Activated naive CD4-positive, alpha-beta T cell treated with anti-CD3 and anti-CD28 coated beads, Interleukin-2, amount 10 ng/mL, durations not matched to agents 7 days and 5 days (primary cell): ENCODE measurements at regions of chr1 and their contacts with region 1.

Region 1: DNA sequence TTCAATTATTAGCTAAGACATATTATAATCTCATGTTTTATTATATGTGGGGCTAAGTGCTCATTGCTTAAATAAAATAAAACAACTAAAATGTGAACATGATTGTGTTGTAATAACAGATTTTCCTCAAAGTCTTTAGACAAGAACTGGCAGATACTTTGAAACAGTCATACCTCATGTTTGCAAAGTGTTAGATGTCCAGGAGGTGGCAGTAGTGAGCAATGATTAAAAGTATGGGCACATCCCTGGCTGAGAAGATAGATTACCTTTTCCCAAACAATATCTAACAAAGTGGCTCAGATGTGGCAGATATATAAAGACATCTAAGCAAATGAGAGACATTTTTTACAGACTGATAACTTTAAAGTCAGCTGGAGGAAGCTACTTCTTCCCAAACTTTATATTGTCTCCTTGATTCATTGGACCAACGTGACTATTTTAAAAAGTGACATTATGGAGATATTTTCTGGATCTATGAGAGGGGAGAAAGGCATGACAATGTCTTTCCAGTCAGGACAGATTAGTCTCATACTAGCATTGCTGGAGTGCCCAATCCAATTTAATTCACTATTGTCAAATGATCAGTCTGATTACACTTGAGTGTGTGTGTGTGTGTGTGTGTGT is 269.8 kb downstream of the S1PR1 start:
- DNase-seq: peak; percentile 58
- H3K4me3 Mint-ChIP-seq: no peak overlapping the region
- H3K27ac Mint-ChIP-seq: no peak overlapping the region
- H3K4me1 Mint-ChIP-seq: no peaks in the 10 kb centered on the region
- H3K27me3 Mint-ChIP-seq: peaks cover 3% of the 10 kb centered on the region

Region 2: GRCh38 chr1:101520302-101520701 is 13.6 kb after region 1 on chr1:
- CTCF ChIA-PET with region 1: interaction called, 20 read pairs
- DNase-seq: peak; percentile 28
- H3K4me3 Mint-ChIP-seq: no peak overlapping the region
- H3K27ac Mint-ChIP-seq: no peak overlapping the region
- H3K4me1 Mint-ChIP-seq: peaks cover 5% of the 10 kb centered on the region
- H3K27me3 Mint-ChIP-seq: no peaks in the 10 kb centered on the region

Region 3: GRCh38 chr1:101632548-101633256 is 126.0 kb after region 1 on chr1:
- CTCF ChIA-PET with region 1: no interaction called
- DNase-seq: no peak
- H3K4me3 Mint-ChIP-seq: no peak overlapping the region
- H3K27ac Mint-ChIP-seq: no peak overlapping the region
- H3K4me1 Mint-ChIP-seq: no peaks in the 10 kb centered on the region
- H3K27me3 Mint-ChIP-seq: no peaks in the 10 kb centered on the region